Caco-2 (cell line): ENCODE measurements at regions of chr7 and their contacts with region 1.

Region 1: GRCh38 chr7:123916240-123916724 is 8.8 kb upstream of the SPAM1 start:
- DNase-seq: peak; percentile 55 to 72
- H3K4me3 ChIP-seq: no peak overlapping the region
- H3K4me3 Mint-ChIP-seq: peak overlapping the region; percentile 20
- H3K27ac Mint-ChIP-seq: peak overlapping the region; percentile 68
- H3K4me1 ChIP-seq: peaks cover 11% of the 10 kb centered on the region
- H3K4me1 Mint-ChIP-seq: peaks cover 14% of the 10 kb centered on the region
- H3K27me3 ChIP-seq: no peaks in the 10 kb centered on the region
- H3K27me3 Mint-ChIP-seq: no peaks in the 10 kb centered on the region
- CTCF ChIP-seq: peak; percentile 50 to 59

Region 2: DNA sequence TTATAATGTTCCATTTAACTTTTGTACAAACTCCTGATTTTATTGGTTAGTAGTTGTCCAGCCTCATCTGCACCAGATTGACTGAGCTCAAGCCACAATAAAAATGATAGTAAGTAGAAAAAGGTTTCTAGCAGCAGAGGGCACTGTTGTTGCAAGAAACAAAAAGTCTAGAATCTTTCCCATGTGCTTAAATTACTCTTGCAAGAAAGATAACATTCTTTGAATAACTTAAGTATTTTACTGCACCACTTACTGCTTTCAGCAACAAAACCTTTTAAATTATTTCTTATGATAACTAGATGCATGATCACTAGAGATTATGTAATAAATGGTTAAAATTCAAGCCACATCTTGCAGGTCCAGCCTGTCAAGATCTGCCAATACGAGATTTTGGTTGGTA is 233.6 kb before region 1 on chr7:
- CTCF ChIA-PET with region 1: no interaction called
- POLR2A ChIA-PET with region 1: no interaction called
- intact Hi-C with region 1: loop called (anchors 5 kb)
- DNase-seq: peak in 1 of 2 experiments; percentile 54
- H3K4me3 ChIP-seq: no peak overlapping the region
- H3K4me3 Mint-ChIP-seq: no peak overlapping the region
- H3K27ac Mint-ChIP-seq: no peak overlapping the region
- H3K4me1 ChIP-seq: peaks cover 19% of the 10 kb centered on the region
- H3K4me1 Mint-ChIP-seq: no peaks in the 10 kb centered on the region
- H3K27me3 ChIP-seq: no peaks in the 10 kb centered on the region
- H3K27me3 Mint-ChIP-seq: no peaks in the 10 kb centered on the region
- CTCF ChIP-seq: peak; percentile 47 to 61